Colonic mucosa (tissue), 4 donors: ENCODE measurements at regions of chr7 and their contacts with region 1.

Region 1: GRCh38 chr7:151032936-151033863 is 5.0 kb downstream of the ABCB8 start:
- DNase-seq: no peak
- H3K4me3 ChIP-seq: no peak overlapping the region
- H3K27ac ChIP-seq: no peak overlapping the region
- H3K4me1 ChIP-seq: no peaks in the 10 kb centered on the region
- H3K27me3 ChIP-seq: no peaks in the 10 kb centered on the region
- CTCF ChIP-seq: no peak

Region 2: GRCh38 chr7:151110941-151111645 is 77.9 kb after region 1 on chr7:
- intact Hi-C with region 1: loop called (anchors 5 kb)
- DNase-seq: peak; percentile 86
- H3K4me3 ChIP-seq: no peak overlapping the region
- H3K27ac ChIP-seq: no peak overlapping the region
- H3K4me1 ChIP-seq: peaks cover 22% of the 10 kb centered on the region
- H3K27me3 ChIP-seq: no peaks in the 10 kb centered on the region
- CTCF ChIP-seq: peak; percentile 84

Region 3: GRCh38 chr7:151717415-151717814 is 684.2 kb after region 1 on chr7:
- intact Hi-C with region 1: no loop called
- DNase-seq: peak; percentile 41
- H3K4me3 ChIP-seq: no peak overlapping the region
- H3K27ac ChIP-seq: no peak overlapping the region
- H3K4me1 ChIP-seq: no peaks in the 10 kb centered on the region
- H3K27me3 ChIP-seq: no peaks in the 10 kb centered on the region
- CTCF ChIP-seq: no peak